ENCODE measurements at regions of chr18 and their contacts with region 1.

Region 1: GRCh38 chr18:78768656-78769501 is 210.7 kb upstream of the SALL3 start:
- DNase-seq: peak; percentile 75

Region 2: GRCh38 chr18:77061946-77062517 is 1706.8 kb before region 1 on chr18:
- intact Hi-C with region 1: loop called in 1 of 2 experiments (anchors 5 kb)
- DNase-seq: no peak

Measured in posterior vena cava (tissue), 2 donors.